Right ventricle myocardium superior (tissue), 1 donor: ENCODE measurements at regions of chr2 and their contacts with region 1.

Region 1: GRCh38 chr2:74147727-74148456 is at the start of gene BOLA3:
- DNase-seq: peak; percentile 93
- ATAC-seq: peak; percentile 99
- total RNA-seq, gene BOLA3: 89.6 TPM

Region 2: GRCh38 chr2:73985308-73986084 is 162.4 kb before region 1 on chr2:
- intact Hi-C with region 1: loop called (anchors 10 kb)
- DNase-seq: peak; percentile 70
- ATAC-seq: peak; percentile 12